ENCODE measurements at regions of chr11 and their contacts with region 1.

Region 1: GRCh38 chr11:74492974-74493790 is at the start of gene LIPT2:
- DNase-seq: peak; percentile 96 to 98 (median 96)
- H3K4me3 ChIP-seq: peak within 1 kb of the TSS; percentile 74
- H3K4me3 Mint-ChIP-seq: peak within 1 kb of the TSS; percentile 80 to 95 (median 88)
- H3K27ac ChIP-seq: peak within 1 kb of the TSS; percentile 92
- H3K27ac Mint-ChIP-seq: peak within 1 kb of the TSS; percentile 81 to 96 (median 88)
- H3K4me1 ChIP-seq: peaks cover 9% of the 10 kb centered on the region
- H3K4me1 Mint-ChIP-seq: peaks cover 18 to 30% (median 19%) of the 10 kb centered on the region in 3 donors
- H3K27me3 ChIP-seq: no peaks in the 10 kb centered on the region
- H3K27me3 Mint-ChIP-seq: no peaks in the 10 kb centered on the region
- total RNA-seq, gene LIPT2: 4.0 to 6.1 TPM

Region 2: DNA sequence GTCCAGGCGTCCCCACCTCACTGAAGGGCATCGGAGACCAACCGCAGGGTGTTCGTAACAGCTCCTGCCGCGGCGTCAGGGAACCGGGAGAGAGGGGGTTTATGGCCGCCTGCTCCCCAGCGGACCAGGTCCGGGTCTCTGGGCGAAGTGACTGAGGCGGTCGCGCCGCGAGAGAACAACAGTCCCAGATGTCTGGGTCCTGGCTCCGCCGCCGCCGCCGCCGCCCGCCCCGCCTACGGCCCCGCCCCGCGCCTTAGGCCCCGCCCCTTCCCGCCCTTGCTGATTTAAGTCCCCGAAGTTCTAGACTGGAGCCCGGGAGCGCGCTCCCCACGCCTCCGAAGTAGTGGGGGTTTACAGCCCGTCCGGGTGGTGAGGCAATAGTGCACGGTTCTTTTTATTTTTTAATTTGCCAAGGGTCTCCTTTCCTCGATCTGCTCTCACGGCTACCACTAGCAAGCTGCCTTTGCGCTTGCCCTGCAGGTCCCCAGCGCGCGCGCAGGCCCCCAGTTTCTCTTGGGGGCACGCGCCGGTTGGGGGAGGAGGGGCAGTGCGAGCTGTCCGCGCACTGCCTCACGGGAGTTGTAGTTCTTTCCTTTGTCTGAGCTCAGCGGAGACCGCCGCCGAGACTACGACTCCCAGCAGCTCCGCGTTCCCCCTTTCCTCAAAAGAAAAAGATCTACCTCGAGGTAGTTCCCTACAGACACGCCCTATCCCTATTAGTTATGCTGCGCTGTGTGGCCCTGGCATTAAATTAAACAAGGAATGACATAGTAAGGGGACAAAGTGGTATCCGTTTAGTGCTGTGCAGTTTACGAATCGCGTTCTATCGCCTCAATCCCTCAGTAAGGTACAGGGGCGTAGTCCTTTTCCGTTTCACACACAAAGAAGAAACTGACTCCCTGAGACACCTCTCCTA is 94.7 kb before region 1 on chr11 and contains the start of gene PGM2L1:
- CTCF ChIA-PET with region 1: interaction called, 3 read pairs
- POLR2A ChIA-PET with region 1: interaction called, 28 read pairs
- DNase-seq: peak; percentile 88 to 96 (median 93)
- H3K4me3 ChIP-seq: peak within 1 kb of the TSS; percentile 91
- H3K4me3 Mint-ChIP-seq: peak within 1 kb of the TSS; percentile 91 to 100 (median 98)
- H3K27ac ChIP-seq: peak within 1 kb of the TSS; percentile 77
- H3K27ac Mint-ChIP-seq: peak within 1 kb of the TSS; percentile 86 to 100 (median 98)
- H3K4me1 ChIP-seq: peaks cover 11% of the 10 kb centered on the region
- H3K4me1 Mint-ChIP-seq: peaks cover 14 to 31% (median 21%) of the 10 kb centered on the region in 3 donors
- H3K27me3 ChIP-seq: no peaks in the 10 kb centered on the region
- H3K27me3 Mint-ChIP-seq: no peaks in the 10 kb centered on the region
- total RNA-seq, gene PGM2L1: 9.6 to 9.8 TPM

Region 3: GRCh38 chr11:74427385-74427886 is 65.7 kb before region 1 on chr11:
- CTCF ChIA-PET with region 1: no interaction called
- POLR2A ChIA-PET with region 1: no interaction called
- DNase-seq: no peak
- H3K4me3 ChIP-seq: no peak overlapping the region
- H3K4me3 Mint-ChIP-seq: no peak overlapping the region
- H3K27ac ChIP-seq: no peak overlapping the region
- H3K27ac Mint-ChIP-seq: no peak overlapping the region
- H3K4me1 ChIP-seq: no peaks in the 10 kb centered on the region
- H3K4me1 Mint-ChIP-seq: no peaks in the 10 kb centered on the region
- H3K27me3 ChIP-seq: no peaks in the 10 kb centered on the region
- H3K27me3 Mint-ChIP-seq: peaks cover 4 to 24% of the 10 kb centered on the region in 2 donors

Region 4: DNA sequence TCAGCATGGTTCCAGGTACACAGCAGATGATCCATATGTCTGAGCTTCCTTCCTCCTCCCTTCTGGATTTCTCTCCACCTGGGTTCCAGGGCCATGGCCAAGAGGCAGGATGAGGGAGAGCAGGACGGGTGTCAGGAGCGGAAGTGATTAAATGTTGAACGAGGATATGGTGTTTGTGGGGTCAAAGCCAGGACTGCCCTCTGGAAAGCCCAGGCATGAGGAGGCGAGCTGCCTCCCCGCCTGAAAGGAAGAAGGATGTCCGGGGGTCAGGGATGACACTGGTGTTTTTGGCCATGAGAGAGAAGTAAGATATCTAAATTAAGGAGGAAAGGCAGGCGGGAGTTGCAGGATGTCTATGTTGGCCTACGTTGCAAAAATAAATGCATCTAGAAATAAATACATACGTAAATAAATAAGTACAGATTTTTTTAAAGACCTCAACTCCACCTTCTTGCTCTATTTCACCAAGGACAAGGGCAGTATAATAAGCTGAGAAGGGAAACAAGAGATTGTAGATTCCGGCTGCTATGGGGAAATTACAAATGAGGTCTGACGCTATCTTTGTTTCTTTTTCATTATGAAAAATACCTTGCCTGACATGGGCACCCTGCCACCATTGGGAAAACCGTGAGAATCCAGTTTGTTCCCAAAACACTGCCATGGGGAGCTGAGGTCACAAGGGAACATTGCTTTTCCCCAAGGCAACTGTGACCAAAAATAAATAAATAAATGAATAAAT is 27.9 kb after region 1 on chr11:
- CTCF ChIA-PET with region 1: no interaction called
- POLR2A ChIA-PET with region 1: no interaction called
- DNase-seq: no peak
- H3K4me3 ChIP-seq: no peak overlapping the region
- H3K4me3 Mint-ChIP-seq: no peak overlapping the region
- H3K27ac ChIP-seq: no peak overlapping the region
- H3K27ac Mint-ChIP-seq: no peak overlapping the region
- H3K4me1 ChIP-seq: no peaks in the 10 kb centered on the region
- H3K4me1 Mint-ChIP-seq: no peaks in the 10 kb centered on the region
- H3K27me3 ChIP-seq: no peaks in the 10 kb centered on the region
- H3K27me3 Mint-ChIP-seq: peaks cover 8 to 23% of the 10 kb centered on the region in 2 donors

Region 5: DNA sequence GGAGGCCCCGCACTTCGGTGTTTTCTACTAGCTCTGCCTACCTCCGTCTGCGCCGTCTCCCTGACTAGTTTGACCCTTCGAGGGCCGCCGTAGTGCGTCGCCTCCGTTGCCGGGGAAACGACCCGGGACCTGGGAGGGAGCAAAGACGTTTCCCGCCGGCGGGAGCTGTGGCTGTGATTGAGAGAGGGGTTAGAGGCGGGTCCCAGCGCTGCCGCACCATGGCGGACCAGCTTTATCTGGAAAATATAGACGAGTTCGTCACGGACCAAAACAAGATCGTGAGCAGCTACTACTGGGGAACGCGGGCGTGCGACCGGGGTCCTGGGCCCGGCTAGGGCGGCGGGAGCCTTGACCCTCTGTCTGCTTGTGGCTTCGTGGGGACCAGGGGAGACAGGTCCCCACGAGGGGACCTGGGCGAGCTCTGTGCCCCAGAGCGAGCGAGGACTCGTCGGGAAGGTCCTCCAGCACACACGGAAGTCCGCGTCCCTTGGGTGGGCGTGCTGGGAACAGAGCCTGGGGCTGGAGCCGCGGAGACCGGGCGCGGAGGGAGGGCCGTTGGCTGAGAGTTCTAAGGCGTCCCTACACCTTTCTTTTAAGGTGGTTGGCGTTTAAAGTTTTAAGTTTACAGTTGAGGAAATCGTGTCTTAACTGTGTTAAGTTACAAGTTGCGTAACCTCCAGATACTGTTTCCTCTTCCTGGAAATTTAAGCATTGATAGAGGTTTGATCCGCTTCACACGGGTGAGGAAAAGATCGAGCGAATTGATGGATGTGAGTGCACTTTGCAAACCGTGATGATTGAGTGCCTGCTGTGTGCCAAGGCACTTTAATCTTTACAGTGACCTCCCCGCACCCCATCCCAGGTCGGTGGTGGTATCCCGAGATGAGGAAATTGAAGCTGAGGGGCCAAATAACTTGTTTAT is 99.5 kb after region 1 on chr11 and contains the start of gene POLD3:
- CTCF ChIA-PET with region 1: no interaction called
- POLR2A ChIA-PET with region 1: interaction called, 14 read pairs
- DNase-seq: peak; percentile 85 to 95 (median 88)
- H3K4me3 ChIP-seq: peak within 1 kb of the TSS; percentile 80
- H3K4me3 Mint-ChIP-seq: peak within 1 kb of the TSS; percentile 91 to 100 (median 95)
- H3K27ac ChIP-seq: peak within 1 kb of the TSS; percentile 84
- H3K27ac Mint-ChIP-seq: peak within 1 kb of the TSS; percentile 88 to 99 (median 95)
- H3K4me1 ChIP-seq: peaks cover 14% of the 10 kb centered on the region
- H3K4me1 Mint-ChIP-seq: peaks cover 22 to 37% (median 30%) of the 10 kb centered on the region in 3 donors
- H3K27me3 ChIP-seq: no peaks in the 10 kb centered on the region
- H3K27me3 Mint-ChIP-seq: peaks cover 2 to 6% of the 10 kb centered on the region in 2 donors
- total RNA-seq, gene POLD3: 53.8 to 57.5 TPM